AG04450 (cell line): ENCODE measurements at regions of chr9 and their contacts with region 1.

Region 1: GRCh38 chr9:18692268-18692667 is 218.3 kb downstream of the ADAMTSL1 start:
- DNase-seq: no peak
- H3K4me3 ChIP-seq: no peak overlapping the region
- H3K27ac ChIP-seq: no peak overlapping the region
- H3K27me3 ChIP-seq: no peaks in the 10 kb centered on the region
- CTCF ChIP-seq: no peak

Region 2: DNA sequence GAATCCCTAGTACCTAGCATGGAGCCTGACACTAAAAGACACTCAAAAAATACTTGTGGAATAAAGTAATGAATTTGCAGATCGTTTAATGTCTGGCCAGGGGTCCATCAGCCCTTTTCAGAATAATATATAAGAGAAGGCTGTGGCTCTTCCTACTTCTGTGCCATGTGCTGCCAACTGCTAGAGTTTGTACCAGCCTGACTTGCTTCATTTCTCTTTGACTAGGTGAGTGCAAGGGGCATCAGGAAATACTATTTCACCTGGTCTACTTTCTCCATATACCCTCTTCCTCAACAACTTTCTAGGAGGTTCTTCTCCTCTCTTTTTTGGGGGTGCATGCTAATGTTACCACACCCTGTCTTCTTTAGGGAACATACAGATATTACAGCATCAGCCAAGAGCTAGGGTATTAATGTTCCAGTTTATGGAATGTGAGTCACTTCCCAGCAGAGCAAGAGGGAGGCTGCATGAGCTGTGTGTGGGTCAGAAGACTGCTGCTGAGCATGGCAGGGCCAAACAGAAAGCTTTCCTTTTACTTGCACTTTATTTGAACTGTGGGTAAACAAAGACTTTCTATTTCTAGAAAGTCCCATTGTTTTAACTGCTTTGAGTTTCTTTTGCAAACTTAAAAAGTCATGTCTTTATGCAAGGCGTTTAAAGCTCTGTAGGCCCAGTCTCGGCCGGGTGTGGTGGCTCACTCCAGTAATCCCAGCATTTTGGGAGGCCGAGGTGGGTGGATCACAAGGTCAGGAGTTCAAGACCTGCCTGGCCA is 59.5 kb before region 1 on chr9:
- CTCF ChIA-PET with region 1: no interaction called
- POLR2A ChIA-PET with region 1: interaction called, 10 read pairs
- DNase-seq: peak; percentile 58
- H3K4me3 ChIP-seq: no peak overlapping the region
- H3K27ac ChIP-seq: peak overlapping the region; percentile 66
- H3K27me3 ChIP-seq: no peaks in the 10 kb centered on the region
- CTCF ChIP-seq: no peak